ENCODE measurements at regions of chr7 and their contacts with region 1.

Region 1: GRCh38 chr7:50679218-50680007 is 103.3 kb downstream of the GRB10 start:
- DNase-seq: peak; percentile 60
- CTCF ChIP-seq: peak; percentile 45

Region 2: DNA sequence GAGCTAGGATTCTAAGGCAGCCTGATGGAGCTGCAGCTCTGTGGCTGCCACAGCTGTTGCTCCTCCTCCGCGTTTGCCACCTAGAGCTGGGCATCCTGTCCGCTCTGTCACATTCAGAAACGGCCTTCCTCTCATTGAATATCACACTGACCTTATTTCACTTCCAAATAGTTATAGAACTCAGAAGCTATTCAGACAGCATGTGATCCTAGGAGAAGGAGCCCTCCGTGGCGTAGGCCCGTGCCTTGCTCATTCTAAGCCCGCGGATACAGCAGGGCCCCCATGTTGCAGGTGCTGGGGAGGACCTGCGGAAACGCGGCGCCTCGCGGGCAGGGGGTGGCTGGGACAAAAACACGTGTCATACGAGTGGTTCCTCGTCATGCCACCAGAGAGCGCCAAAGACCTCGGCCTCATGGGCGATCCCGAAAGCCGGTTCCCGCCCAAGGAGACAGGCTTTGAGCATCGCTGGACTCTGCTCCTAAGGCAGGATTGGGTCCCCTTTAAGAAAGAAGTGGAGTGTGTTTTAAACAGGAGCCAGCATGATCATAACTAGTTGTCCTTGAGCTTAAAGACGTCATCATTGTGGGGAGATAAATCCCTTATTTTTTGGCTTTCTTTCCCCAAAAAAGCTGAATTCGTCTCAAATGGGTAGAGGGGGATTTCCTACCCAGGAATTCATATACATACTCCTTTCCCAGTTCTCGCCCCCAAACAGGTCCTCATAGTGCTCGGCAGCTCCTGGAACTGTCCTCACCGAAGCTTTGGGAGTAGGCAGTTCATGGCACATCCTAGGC is 211.4 kb before region 1 on chr7:
- in situ Hi-C with region 1: loop called (anchors 25 kb)
- DNase-seq: peak; percentile 80
- CTCF ChIP-seq: peak; percentile 82

Measured in GM13977 (cell line).